HepG2 (cell line): ENCODE measurements at regions of chr6 and their contacts with region 1.

Region 1: DNA sequence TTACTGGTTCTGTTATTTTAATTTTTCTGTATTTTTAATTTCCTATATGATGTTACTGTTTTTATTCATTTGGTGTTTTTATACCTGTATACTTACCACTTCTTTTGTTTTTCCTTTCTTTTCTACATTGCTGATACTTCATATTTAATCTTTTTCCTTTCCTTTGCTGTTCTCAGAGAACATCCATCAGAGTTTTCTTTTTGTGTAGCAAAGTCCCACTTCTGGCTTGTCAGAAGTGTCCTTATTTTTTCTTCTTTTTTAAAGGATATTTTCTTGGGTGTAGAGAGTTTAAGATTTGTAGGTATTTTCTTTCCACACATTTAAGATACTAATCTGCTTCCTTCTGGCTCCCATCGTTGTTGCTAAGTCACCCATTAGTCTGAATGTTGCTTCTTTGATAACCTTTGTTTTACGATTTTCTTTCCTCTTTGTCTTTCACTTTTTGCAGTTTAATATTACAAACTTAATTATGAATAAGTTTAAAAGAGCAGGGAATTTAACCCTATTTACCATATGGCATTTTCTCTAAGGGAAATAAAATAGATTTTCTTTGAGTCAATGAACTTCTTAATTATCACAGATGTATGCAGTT is 18.5 kb downstream of the CD2AP start:
- DNase-seq: no peak
- ATAC-seq: no peak
- H3K4me3 ChIP-seq: no peak overlapping the region
- H3K27ac ChIP-seq: no peak overlapping the region
- H3K4me1 ChIP-seq: peaks cover 42% of the 10 kb centered on the region
- H3K27me3 ChIP-seq: no peaks in the 10 kb centered on the region
- CTCF ChIP-seq: no peak
- EP300 ChIP-seq: no peak
- POLR2A ChIP-seq: no peak
- RAD21 ChIP-seq: no peak

Region 2: DNA sequence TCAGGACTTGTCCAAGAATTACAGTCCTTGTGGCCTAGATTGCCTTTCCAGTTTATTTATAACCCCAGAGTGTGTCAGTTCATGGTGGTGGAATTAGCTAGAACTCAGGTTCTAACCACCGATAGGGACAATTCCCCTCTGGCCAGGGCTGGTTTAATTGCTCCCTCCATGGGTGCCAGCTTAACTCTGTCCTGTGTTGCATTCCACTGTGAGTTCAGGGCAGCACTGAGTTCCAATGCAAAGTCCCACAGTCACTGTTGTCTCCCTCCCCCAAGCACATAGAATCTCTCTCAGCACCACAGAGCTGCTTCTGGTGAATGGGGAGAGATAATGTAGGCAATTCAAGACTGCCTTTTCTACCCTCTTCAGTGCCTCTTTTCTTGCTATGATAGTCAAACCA is 103.8 kb before region 1 on chr6:
- CTCF ChIA-PET with region 1: no interaction called
- POLR2A ChIA-PET with region 1: no interaction called
- in situ Hi-C with region 1: no loop called
- intact Hi-C with region 1: no loop called
- DNase-seq: no peak
- ATAC-seq: no peak; the same call in 2 of the 3 replicates
- H3K4me3 ChIP-seq: no peak overlapping the region
- H3K27ac ChIP-seq: no peak overlapping the region
- H3K4me1 ChIP-seq: no peaks in the 10 kb centered on the region
- H3K27me3 ChIP-seq: no peaks in the 10 kb centered on the region
- CTCF ChIP-seq: no peak
- EP300 ChIP-seq: no peak
- POLR2A ChIP-seq: no peak
- RAD21 ChIP-seq: no peak

Region 3: DNA sequence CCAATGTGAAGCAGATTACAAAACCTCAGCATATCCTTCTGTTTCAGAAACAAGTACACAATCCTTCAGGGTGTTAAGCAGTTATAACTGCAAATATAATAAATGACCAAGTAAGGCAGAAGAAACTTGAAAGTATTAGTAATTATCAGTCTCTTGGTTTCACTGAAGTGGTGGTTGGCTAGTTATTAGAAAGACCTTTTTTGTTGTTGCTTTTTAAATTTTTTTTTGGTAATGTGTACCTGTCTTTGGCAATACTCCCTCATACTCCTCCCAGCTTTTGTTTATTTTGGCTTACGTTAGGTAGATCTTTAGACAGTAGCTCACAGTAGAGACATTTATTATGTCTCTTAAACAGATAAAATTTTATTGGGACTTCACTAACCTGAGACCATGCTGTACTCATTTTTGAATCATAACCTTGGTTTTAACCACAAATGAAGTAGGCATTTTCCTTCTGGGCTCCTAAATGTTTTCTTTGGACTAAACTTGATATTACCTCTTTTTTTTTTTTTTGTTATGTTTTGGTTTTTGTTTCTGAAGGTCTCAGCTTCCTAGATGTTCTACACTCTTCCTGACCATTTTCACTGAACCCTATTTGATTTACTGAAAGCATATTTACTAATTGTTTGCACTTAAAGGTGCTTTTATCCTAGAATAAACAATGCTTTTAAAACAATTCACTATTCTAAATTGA is 12.1 kb before region 1 on chr6:
- CTCF ChIA-PET with region 1: no interaction called
- POLR2A ChIA-PET with region 1: no interaction called
- in situ Hi-C with region 1: no loop called
- intact Hi-C with region 1: loop called (anchors 2 kb)
- DNase-seq: peak; percentile 31
- ATAC-seq: peak; percentile 41
- H3K4me3 ChIP-seq: no peak overlapping the region
- H3K27ac ChIP-seq: peak overlapping the region; percentile 19
- H3K4me1 ChIP-seq: peaks cover 53% of the 10 kb centered on the region
- H3K27me3 ChIP-seq: no peaks in the 10 kb centered on the region
- CTCF ChIP-seq: no peak
- EP300 ChIP-seq: no peak
- POLR2A ChIP-seq: no peak
- RAD21 ChIP-seq: no peak

Region 4: DNA sequence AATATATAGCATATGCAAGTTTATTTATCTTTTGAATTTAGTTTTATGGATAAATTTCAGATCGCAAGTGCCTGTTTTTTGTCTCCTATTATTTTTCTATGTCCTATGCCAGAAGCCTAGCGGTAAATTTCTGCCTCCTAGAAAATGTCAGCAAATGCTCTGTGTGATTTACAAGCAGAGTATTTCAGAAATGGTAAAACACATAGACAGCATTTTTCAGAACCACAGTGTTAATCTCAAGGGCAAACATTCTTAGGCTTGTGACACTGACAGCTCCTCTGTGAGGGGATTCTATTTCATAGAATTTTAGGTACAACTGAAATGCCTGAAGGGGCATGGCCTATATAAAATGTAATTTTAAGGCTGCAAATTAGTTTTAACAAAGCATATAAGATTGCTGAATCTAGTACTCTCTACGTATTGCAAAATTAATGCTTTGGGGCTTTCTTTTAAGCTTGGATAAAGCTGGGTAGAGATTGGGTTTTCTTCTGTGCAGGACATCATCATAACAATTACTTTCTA is 704.9 kb after region 1 on chr6:
- CTCF ChIA-PET with region 1: no interaction called
- POLR2A ChIA-PET with region 1: no interaction called
- in situ Hi-C with region 1: no loop called
- intact Hi-C with region 1: no loop called
- DNase-seq: peak; percentile 18
- ATAC-seq: peak; percentile 59; the same call in 2 of the 3 replicates
- H3K4me3 ChIP-seq: no peak overlapping the region
- H3K27ac ChIP-seq: no peak overlapping the region
- H3K4me1 ChIP-seq: peaks cover 6% of the 10 kb centered on the region; the same call in 1 of the 2 replicates
- H3K27me3 ChIP-seq: no peaks in the 10 kb centered on the region
- CTCF ChIP-seq: no peak
- EP300 ChIP-seq: no peak
- POLR2A ChIP-seq: no peak
- RAD21 ChIP-seq: no peak